H1 (cell line): ENCODE measurements at regions of chr7 and their contacts with region 1.

Region 1: GRCh38 chr7:67302113-67303039 is 305.7 kb downstream of the TYW1 start:
- DNase-seq: peak; percentile 91 to 97
- H3K4me3 ChIP-seq: peak overlapping the region; percentile 71 to 93 (median 90)
- H3K27ac ChIP-seq: peak overlapping the region; percentile 96
- H3K4me1 ChIP-seq: peaks cover 0 to 2% (median 0%) of the 10 kb centered on the region in 4 experiments; a peak in 1 of 7 replicates
- H3K27me3 ChIP-seq: no peaks in the 10 kb centered on the region
- CTCF ChIP-seq: no peak
- EP300 ChIP-seq: no peak
- POLR2A ChIP-seq: peak; percentile 65 to 93
- RAD21 ChIP-seq: 0 out of 4 replicates have a peak, but pooled peaks of 1 of the 2 experiments have one; percentile 0

Region 2: GRCh38 chr7:67313213-67313612 is 10.8 kb after region 1 on chr7:
- CTCF ChIA-PET with region 1: no interaction called
- POLR2A ChIA-PET with region 1: interaction called, 12 read pairs
- DNase-seq: no peak
- H3K4me3 ChIP-seq: no peak overlapping the region
- H3K27ac ChIP-seq: no peak overlapping the region
- H3K4me1 ChIP-seq: no peaks in the 10 kb centered on the region
- H3K27me3 ChIP-seq: no peaks in the 10 kb centered on the region
- CTCF ChIP-seq: no peak
- EP300 ChIP-seq: no peak
- POLR2A ChIP-seq: no peak
- RAD21 ChIP-seq: no peak